ENCODE measurements at regions of chr11 and their contacts with region 1.

Region 1: GRCh38 chr11:12888525-12889158 is 120.5 kb upstream of the RASSF10 start:
- DNase-seq: peak; percentile 70
- CTCF ChIP-seq: peak; percentile 68

Region 2: GRCh38 chr11:12288212-12288930 is 600.3 kb before region 1 on chr11:
- CTCF ChIA-PET with region 1: interaction called, 10 read pairs
- POLR2A ChIA-PET with region 1: no interaction called
- DNase-seq: peak; percentile 77
- CTCF ChIP-seq: peak; percentile 88

Region 3: DNA sequence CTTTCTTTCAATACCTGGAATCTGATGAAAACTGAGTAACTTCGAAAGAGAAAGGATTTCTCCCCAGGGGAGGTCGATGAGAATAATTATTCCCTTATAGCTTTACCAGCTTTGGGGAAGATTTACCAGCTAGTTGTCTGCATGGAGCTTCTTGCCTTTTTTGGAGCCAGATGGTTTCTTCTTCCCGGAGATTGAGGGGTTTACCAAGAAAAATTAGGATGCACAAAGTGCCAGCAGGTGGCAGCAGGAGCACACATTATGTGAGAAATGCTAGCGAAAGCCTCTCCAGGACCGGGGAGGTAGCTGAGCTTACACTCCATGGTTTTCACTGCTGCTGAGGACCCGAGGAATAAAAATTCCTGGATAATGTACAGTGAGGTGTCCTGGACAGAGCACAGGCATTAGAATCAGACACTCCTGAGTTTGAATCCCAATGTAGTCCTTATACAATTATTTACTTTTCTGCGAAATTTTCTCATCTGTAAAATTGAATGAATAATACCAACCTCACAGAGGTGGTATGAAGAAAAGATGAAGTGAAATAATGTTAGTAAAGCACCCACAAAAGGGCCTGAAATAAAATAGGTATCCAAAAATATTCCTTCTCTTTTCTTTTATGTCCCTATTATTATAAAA is 557.3 kb before region 1 on chr11:
- CTCF ChIA-PET with region 1: interaction called, 114 read pairs
- POLR2A ChIA-PET with region 1: no interaction called
- DNase-seq: peak; percentile 47
- CTCF ChIP-seq: peak; percentile 83

Region 4: DNA sequence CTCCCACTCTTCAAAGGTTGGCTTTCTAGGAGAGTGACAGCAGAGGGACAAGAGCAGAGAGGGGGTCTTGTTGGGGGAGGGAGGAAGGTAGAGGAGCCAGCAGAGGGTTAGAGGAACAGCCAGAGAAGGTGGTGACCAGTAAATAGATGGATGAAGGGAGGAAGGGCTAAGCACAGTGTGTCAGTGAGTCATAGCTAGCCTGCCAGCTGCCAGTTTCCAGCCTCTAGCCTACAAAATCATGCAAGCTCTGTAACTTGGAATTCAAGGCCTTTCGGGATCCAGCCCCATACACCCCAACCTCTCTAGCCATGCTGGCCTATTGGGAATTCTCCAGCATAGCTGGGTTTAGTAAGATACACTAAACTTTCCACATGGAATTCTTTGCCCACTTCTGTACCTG is 361.9 kb before region 1 on chr11:
- CTCF ChIA-PET with region 1: no interaction called
- POLR2A ChIA-PET with region 1: no interaction called
- DNase-seq: no peak
- CTCF ChIP-seq: no peak

Region 5: GRCh38 chr11:12599408-12600143 is 289.1 kb before region 1 on chr11:
- CTCF ChIA-PET with region 1: interaction called, 83 read pairs
- POLR2A ChIA-PET with region 1: no interaction called
- DNase-seq: peak; percentile 57
- CTCF ChIP-seq: peak; percentile 84

Region 6: DNA sequence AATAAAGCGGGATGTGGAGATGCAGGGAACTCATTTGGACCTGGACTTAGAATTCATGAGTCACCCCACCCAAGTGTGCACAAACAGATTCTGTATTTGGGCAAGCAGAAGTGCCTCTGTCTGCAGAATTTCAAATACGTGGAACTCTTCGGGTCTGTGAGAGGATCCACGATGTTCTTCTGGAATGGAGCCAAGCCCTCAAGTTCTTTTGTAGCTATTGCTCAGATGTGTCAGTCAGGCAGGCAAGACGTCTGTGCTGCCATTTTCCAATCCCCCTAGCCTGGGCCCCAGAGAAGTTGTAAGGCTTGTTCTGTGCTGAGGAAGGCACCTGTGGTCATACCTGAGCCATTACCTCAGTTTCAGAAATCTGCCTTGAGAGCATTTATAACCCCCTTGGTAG is 12.3 kb before region 1 on chr11:
- CTCF ChIA-PET with region 1: interaction called, 38 read pairs
- POLR2A ChIA-PET with region 1: no interaction called
- DNase-seq: no peak
- CTCF ChIP-seq: no peak

Region 7: DNA sequence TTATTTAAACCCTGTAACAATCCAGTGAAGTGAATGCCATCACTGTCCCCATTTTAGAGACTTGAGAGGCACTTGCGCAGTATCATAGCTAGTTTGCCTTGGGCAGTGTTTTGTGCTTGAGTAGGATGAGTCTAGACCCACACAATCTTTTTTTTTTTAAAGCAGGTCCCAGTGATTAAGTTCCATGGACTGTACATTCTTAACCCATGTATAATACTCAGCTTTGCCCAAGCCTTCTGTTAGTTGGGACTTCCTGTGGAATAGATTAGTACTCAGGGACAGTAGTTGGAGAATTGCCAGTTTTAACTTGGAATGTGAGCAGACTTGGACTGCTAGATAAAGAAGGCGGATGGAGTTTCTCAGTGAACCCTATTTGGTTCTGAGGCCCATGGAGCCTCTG is 11.9 kb after region 1 on chr11:
- CTCF ChIA-PET with region 1: interaction called, 23 read pairs
- POLR2A ChIA-PET with region 1: no interaction called
- DNase-seq: no peak
- CTCF ChIP-seq: no peak